ENCODE measurements at regions of chr10 and their contacts with region 1.

Region 1: DNA sequence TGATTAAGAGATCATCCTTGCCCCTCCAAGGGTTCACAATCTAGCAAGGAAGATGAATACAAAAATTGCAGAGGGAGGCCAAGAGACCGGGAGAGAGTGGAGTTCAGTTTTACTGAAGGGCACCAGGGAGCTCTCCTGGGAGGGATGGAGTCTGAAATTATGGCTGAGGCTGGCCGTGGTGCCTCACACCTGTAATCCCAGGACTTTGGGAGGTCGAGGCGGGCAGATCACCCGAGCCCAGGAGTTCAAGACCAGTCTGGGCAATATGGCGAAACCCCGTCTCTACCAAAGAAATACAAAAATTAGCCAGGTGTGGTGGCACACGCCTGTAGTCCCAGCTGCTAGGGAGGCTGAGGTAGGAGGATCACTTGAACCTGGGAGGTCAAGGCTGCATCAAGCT is 51.4 kb upstream of the MXI1 start:
- DNase-seq: no peak
- ATAC-seq: no peak
- H3K4me3 ChIP-seq: no peak overlapping the region
- H3K27ac ChIP-seq: no peak overlapping the region
- H3K4me1 ChIP-seq: no peaks in the 10 kb centered on the region
- H3K27me3 ChIP-seq: no peaks in the 10 kb centered on the region

Region 2: DNA sequence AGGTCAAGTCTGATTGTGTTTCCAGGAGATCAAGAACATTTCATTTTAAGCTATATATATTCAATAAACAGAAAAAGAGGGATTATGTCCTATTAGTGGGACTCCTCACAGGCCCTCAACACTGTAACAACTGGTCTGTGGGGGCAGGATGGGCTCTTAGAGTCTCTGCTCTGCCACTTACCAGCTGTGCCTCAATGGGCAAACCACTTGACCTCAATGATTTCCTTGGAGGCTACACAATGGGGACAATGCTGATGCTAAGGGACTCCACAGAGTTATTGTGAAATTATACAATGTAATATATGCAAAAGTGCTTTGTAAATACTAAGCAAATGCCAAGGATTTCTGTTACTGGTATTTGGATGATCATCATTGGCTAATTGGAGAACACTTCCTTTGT is 18.2 kb after region 1 on chr10:
- intact Hi-C with region 1: loop called in 1 of 4 experiments (anchors 1 kb)
- DNase-seq: no peak
- ATAC-seq: no peak
- H3K4me3 ChIP-seq: no peak overlapping the region
- H3K27ac ChIP-seq: no peak overlapping the region
- H3K4me1 ChIP-seq: peaks cover 3% of the 10 kb centered on the region
- H3K27me3 ChIP-seq: no peaks in the 10 kb centered on the region